ENCODE measurements at regions of chr6 and their contacts with region 1.

Region 1: GRCh38 chr6:146775226-146775625 is 176.5 kb downstream of the ADGB start:
- DNase-seq: peak in 5 of 9 donors; percentile 1 to 25 (median 13)
- ATAC-seq: no peak
- H3K4me3 ChIP-seq: no peak overlapping the region
- H3K4me3 Mint-ChIP-seq: no peak overlapping the region
- H3K27ac ChIP-seq: no peak overlapping the region
- H3K27ac Mint-ChIP-seq: no peak overlapping the region
- H3K4me1 ChIP-seq: peaks cover 3 to 10% of the 10 kb centered on the region in 2 donors
- H3K4me1 Mint-ChIP-seq: peaks cover 13 to 23% (median 22%) of the 10 kb centered on the region in 7 donors
- H3K27me3 ChIP-seq: no peaks in the 10 kb centered on the region
- H3K27me3 Mint-ChIP-seq: peaks cover 0 to 13% (median 0%) of the 10 kb centered on the region in 5 donors

Region 2: GRCh38 chr6:145929037-145929633 is 846.1 kb before region 1 on chr6:
- CTCF ChIA-PET with region 1: interaction called, 7 read pairs
- POLR2A ChIA-PET with region 1: no interaction called
- intact Hi-C with region 1: loop called (anchors 1 kb)
- DNase-seq: peak in 5 of 9 donors; percentile 8 to 37 (median 23)
- ATAC-seq: no peak
- H3K4me3 ChIP-seq: no peak overlapping the region
- H3K4me3 Mint-ChIP-seq: no peak overlapping the region
- H3K27ac ChIP-seq: no peak overlapping the region
- H3K27ac Mint-ChIP-seq: no peak overlapping the region
- H3K4me1 ChIP-seq: no peaks in the 10 kb centered on the region
- H3K4me1 Mint-ChIP-seq: no peaks in the 10 kb centered on the region
- H3K27me3 ChIP-seq: no peaks in the 10 kb centered on the region
- H3K27me3 Mint-ChIP-seq: no peaks in the 10 kb centered on the region

Measured in naive thymus-derived CD4-positive, alpha-beta T cell (primary cell).